Activated naive CD4-positive, alpha-beta T cell treated with anti-CD3 and anti-CD28 coated beads, Interleukin-2, amount 10 ng/mL, durations not matched to agents 7 days and 5 days (primary cell): ENCODE measurements at regions of chr17 and their contacts with region 1.

Region 1: GRCh38 chr17:13017659-13018459 is at the start of gene ELAC2:
- DNase-seq: peak; percentile 96
- H3K4me3 Mint-ChIP-seq: peak within 1 kb of the TSS; percentile 95
- H3K27ac Mint-ChIP-seq: peak within 1 kb of the TSS; percentile 95
- H3K4me1 Mint-ChIP-seq: peaks cover 26% of the 10 kb centered on the region
- H3K27me3 Mint-ChIP-seq: no peaks in the 10 kb centered on the region

Region 2: DNA sequence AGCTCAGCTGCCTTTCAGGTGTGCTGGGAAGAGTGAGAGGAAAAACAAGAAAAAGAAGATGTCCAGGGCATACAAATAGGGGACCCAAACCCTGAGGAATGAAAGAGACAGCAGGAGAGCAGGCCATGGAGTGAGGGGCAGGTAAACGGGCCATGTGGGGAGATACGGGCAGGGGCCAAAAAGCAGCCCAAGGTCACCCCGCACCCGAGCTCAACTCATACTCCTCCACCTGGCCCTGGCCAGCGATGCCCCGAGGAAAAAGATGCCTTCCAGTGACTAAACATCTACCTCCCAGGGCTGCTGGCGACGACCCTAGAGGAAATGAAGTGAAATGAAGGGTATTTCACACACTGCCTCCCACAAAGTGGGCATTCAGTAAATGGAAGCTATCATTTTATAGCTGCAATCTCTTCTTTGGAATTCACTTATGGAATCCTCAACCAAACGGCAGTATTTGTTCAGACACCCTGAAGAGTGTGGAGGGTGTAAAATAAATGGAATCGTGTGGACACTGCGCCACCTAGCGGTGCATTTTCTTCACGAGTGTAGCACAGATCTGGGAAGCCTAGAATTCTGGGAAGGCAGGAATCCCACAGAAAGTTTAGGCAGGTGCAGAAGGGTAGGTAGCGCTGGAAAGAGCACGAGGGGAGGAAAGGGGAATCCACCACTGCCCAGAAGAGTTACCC is 14.9 kb before region 1 on chr17:
- CTCF ChIA-PET with region 1: interaction called, 22 read pairs
- DNase-seq: peak; percentile 57
- H3K4me3 Mint-ChIP-seq: no peak overlapping the region
- H3K27ac Mint-ChIP-seq: no peak overlapping the region
- H3K4me1 Mint-ChIP-seq: no peaks in the 10 kb centered on the region
- H3K27me3 Mint-ChIP-seq: no peaks in the 10 kb centered on the region

Region 3: GRCh38 chr17:13031718-13032350 is 14.0 kb after region 1 on chr17:
- CTCF ChIA-PET with region 1: interaction called, 74 read pairs
- DNase-seq: peak; percentile 61
- H3K4me3 Mint-ChIP-seq: no peak overlapping the region
- H3K27ac Mint-ChIP-seq: peak overlapping the region; percentile 42
- H3K4me1 Mint-ChIP-seq: peaks cover 16% of the 10 kb centered on the region
- H3K27me3 Mint-ChIP-seq: peaks cover 8% of the 10 kb centered on the region